ENCODE measurements at regions of chr9 and their contacts with region 1.

Region 1: GRCh38 chr9:86044001-86044400 is 55.4 kb downstream of the GOLM1 start:
- DNase-seq: no peak
- ATAC-seq: no peak
- H3K4me3 ChIP-seq: no peak overlapping the region
- H3K27ac ChIP-seq: no peak overlapping the region
- H3K4me1 ChIP-seq: peaks cover 5% of the 10 kb centered on the region; the same call in 1 of the 2 replicates
- H3K27me3 ChIP-seq: no peaks in the 10 kb centered on the region
- CTCF ChIP-seq: no peak
- POLR2A ChIP-seq: no peak
- RAD21 ChIP-seq: no peak

Region 2: GRCh38 chr9:86062845-86063693 is 19.1 kb after region 1 on chr9:
- CTCF ChIA-PET with region 1: no interaction called
- POLR2A ChIA-PET with region 1: no interaction called
- dilution Hi-C with region 1: no loop called
- in situ Hi-C with region 1: no loop called
- intact Hi-C with region 1: no loop called
- DNase-seq: no peak
- ATAC-seq: no peak
- H3K4me3 ChIP-seq: no peak overlapping the region
- H3K27ac ChIP-seq: no peak overlapping the region
- H3K4me1 ChIP-seq: no peaks in the 10 kb centered on the region
- H3K27me3 ChIP-seq: no peaks in the 10 kb centered on the region
- CTCF ChIP-seq: no peak
- POLR2A ChIP-seq: no peak
- RAD21 ChIP-seq: no peak

Region 3: DNA sequence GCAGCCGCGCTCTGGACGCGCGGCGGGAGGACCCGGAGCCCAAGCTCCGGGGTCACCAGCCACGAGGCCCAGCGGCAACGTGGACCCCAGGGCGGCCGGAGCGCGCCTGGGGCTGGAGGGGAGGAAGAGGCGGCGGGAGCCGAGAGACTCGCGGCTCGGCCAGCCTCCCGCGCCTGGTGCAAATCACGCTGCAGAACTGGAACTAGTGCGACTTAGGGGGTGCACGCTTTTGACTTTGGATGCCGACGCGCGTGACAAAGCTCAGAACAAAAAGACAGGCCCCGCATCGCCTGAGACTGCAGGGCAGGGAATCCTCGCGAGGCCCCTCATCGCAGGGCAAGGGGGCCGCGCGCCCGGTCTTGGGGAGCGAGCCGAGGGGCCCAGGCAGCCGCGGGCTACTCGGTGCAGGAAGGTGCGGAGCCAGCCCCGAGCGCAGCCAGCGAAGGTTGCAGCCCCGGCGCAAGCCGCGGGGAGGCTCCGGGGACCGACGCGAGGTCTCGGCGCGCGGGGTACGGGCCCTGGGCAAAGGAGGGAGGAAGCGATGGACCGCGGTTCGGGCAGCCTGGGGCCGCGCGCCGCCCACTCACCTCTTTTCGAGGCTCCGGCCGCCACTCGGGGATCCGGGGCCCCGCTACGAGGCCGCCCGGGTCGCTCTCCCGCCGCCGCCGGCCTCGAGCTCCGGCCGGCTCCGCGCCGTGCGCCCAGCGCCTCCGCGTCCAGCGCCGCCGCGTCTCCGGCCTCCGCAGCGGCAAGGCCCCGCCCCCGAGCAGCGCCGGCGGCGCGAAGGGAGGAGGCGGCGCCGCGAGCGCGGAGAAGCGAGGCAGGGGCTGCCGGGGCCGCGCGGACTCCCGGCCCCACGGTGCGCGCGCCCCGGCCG is 55.1 kb after region 1 on chr9 and contains the start of gene GOLM1:
- CTCF ChIA-PET with region 1: no interaction called
- POLR2A ChIA-PET with region 1: no interaction called
- dilution Hi-C with region 1: no loop called
- in situ Hi-C with region 1: no loop called
- intact Hi-C with region 1: loop called (anchors 2 kb)
- DNase-seq: peak; percentile 60
- ATAC-seq: peak; percentile 93
- H3K4me3 ChIP-seq: peak within 1 kb of the TSS; percentile 75
- H3K27ac ChIP-seq: peak within 1 kb of the TSS; percentile 30
- H3K4me1 ChIP-seq: peaks cover 4% of the 10 kb centered on the region; the same call in 1 of the 2 replicates
- H3K27me3 ChIP-seq: peaks cover 4% of the 10 kb centered on the region
- CTCF ChIP-seq: no peak
- POLR2A ChIP-seq: no peak
- RAD21 ChIP-seq: no peak
- total RNA-seq, gene GOLM1: 54.8 and 63.9 TPM in 2 replicates

Region 4: DNA sequence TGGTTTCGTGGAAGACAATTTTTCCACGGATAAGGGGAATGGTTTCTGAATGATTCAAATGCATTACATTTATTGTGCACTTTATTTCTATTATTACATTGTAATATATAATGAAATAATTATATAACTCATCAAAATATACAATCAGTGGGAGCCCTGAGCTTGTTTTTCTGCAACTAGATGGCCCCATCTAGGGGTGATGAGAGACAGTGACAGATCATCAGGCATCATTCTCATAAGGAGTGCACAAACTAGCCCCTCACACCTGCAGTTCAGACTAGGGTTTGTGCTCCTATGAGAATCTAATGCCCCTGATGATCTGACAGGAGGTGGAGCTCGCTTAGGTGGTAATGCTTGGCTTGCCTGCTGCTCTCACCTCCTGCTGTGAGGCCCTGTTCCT is 232.0 kb after region 1 on chr9:
- CTCF ChIA-PET with region 1: no interaction called
- POLR2A ChIA-PET with region 1: no interaction called
- dilution Hi-C with region 1: no loop called
- in situ Hi-C with region 1: no loop called
- intact Hi-C with region 1: loop called (anchors 10 kb)
- DNase-seq: no peak
- ATAC-seq: peak; percentile 48
- H3K4me3 ChIP-seq: no peak overlapping the region
- H3K27ac ChIP-seq: no peak overlapping the region
- H3K4me1 ChIP-seq: peaks cover 6% of the 10 kb centered on the region
- H3K27me3 ChIP-seq: no peaks in the 10 kb centered on the region
- CTCF ChIP-seq: no peak; the same call in 1 of the 2 replicates
- POLR2A ChIP-seq: no peak
- RAD21 ChIP-seq: peak; percentile 21; the same call in 1 of the 2 replicates